ENCODE measurements at regions of chr21 and their contacts with region 1.

Region 1: DNA sequence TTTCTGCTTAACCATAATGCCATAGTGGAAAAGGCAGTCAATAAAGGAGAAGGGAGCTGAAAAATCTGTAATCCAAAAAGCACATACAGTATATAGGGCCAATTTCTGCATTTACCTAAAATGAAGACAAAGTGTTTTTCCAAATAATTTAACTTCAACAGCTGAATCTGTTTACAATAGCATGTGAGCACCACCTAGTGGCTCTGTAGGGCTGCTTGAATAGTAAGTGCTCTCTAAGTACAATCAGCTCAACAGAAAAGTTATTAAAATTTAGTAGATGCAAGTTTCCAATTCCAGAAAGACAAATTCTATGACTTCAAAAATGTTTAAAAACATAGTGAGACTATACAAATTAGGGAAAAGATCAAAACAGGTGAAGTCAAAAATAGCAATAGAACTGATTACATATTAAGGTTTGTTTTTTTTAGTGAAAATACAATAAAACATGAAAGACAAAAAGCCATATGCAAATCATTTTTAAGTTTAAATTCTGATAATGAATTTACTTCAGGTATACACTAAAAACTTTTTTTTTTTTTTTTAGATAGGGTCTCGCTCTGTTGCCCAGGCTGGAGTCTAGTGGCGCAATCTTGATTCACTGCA is 220.0 kb downstream of the SETD4 start:
- DNase-seq: peak in 1 of 2 donors; percentile 79
- H3K4me3 ChIP-seq: no peak overlapping the region
- H3K27ac ChIP-seq: no peak overlapping the region
- H3K4me1 ChIP-seq: peaks cover 0 to 6% (median 2%) of the 10 kb centered on the region in 4 donors
- H3K27me3 ChIP-seq: no peaks in the 10 kb centered on the region
- CTCF ChIP-seq: peak; percentile 74 to 76

Region 2: GRCh38 chr21:34745557-34746255 is 1094.6 kb before region 1 on chr21:
- intact Hi-C with region 1: loop called (anchors 5 kb)
- DNase-seq: peak; percentile 64 to 75
- H3K4me3 ChIP-seq: no peak overlapping the region
- H3K27ac ChIP-seq: no peak overlapping the region
- H3K4me1 ChIP-seq: peaks cover 0 to 14% (median 0%) of the 10 kb centered on the region in 4 donors
- H3K27me3 ChIP-seq: peaks cover 0 to 5% of the 10 kb centered on the region in 2 donors
- CTCF ChIP-seq: peak; percentile 82 to 90

Region 3: DNA sequence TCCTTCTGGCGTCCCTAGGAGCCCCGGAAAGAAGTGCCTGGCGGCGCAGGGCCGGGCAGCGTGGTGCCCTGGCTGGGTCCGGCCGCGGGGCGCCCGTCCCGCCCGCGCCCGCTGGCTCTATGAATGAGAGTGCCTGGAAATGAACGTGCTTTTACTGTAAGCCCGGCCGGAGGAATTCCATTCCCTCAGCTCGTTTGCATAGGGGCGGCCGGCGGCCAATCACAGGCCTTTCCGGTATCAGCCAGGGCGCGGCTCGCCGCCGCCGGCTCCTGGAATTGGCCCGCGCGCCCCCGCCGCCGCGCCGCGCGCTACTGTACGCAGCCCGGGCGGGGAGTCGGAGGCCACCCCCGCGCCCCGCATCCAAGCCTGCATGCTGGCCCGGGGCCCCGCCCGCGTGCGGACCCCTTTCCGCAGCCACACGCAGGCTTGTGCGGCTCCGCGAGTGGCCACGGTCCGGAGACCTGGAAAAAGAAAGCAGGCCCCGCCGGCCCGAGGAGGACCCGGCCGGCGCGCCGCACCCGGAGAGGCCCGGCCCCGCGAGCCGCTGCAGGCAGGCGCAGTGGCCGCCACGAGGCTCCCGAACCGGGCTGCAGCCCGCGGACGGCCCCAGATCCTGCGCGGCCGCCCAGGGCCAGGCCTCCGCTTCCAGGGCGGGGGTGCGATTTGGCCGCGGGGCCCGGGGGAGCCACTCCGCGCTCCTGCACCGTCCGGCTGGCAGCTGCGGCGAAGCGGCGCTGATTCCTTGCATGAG is 951.6 kb before region 1 on chr21:
- intact Hi-C with region 1: loop called (anchors 10 kb)
- DNase-seq: peak; percentile 95 to 96
- H3K4me3 ChIP-seq: peak overlapping the region; percentile 66 to 67
- H3K27ac ChIP-seq: peak overlapping the region; percentile 78 to 80
- H3K4me1 ChIP-seq: peaks cover 0 to 37% (median 23%) of the 10 kb centered on the region in 4 donors
- H3K27me3 ChIP-seq: peaks cover 0 to 59% of the 10 kb centered on the region in 2 donors
- CTCF ChIP-seq: no peak

Region 4: GRCh38 chr21:35730325-35730724 is 110.0 kb before region 1 on chr21:
- intact Hi-C with region 1: no loop called
- DNase-seq: no peak
- H3K4me3 ChIP-seq: no peak overlapping the region
- H3K27ac ChIP-seq: no peak overlapping the region
- H3K4me1 ChIP-seq: no peaks in the 10 kb centered on the region
- H3K27me3 ChIP-seq: peaks cover 0 to 2% of the 10 kb centered on the region in 2 donors
- CTCF ChIP-seq: no peak

Region 5: DNA sequence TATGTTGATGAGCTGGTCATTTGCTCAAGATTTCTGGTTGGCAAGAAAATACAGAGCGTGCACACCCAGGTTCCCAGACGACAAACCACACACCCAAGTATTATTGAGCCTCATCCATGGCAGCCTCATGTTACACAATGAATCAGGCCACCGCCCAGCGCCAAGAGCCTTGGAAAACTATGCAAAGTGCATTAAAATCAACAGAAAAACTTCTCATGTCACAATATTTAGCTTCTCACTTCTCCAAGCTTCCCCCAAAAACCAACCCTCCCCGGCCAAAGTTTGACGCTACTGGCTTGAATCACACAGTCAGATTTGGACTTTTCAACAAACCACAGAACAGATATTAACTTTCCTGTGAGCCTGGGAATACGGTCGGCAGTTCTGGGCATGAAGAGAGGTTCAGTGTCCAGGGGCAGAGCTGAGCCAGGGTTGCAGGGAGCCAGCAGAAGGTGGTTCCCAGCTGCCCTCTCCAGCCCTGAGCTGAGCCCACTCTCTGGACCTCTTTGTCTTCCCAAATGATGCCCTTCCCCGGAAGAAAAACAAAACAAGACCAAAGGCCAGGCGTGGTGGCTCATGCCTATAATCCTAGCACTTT is 148.9 kb after region 1 on chr21:
- intact Hi-C with region 1: no loop called
- DNase-seq: peak; percentile 78 to 79
- H3K4me3 ChIP-seq: no peak overlapping the region
- H3K27ac ChIP-seq: no peak overlapping the region
- H3K4me1 ChIP-seq: no peaks in the 10 kb centered on the region
- H3K27me3 ChIP-seq: peaks cover 0 to 6% of the 10 kb centered on the region in 2 donors
- CTCF ChIP-seq: no peak